ENCODE measurements at regions of chr3 and their contacts with region 1.

Region 1: GRCh38 chr3:30353711-30354467 is 252.5 kb upstream of the TGFBR2 start:
- DNase-seq: no peak
- ATAC-seq: peak; percentile 72
- H3K4me3 Mint-ChIP-seq: no peak overlapping the region
- H3K27ac Mint-ChIP-seq: peak overlapping the region; percentile 30
- H3K4me1 Mint-ChIP-seq: peaks cover 35% of the 10 kb centered on the region
- H3K27me3 Mint-ChIP-seq: peaks cover 21% of the 10 kb centered on the region
- CTCF ChIP-seq: no peak

Region 2: GRCh38 chr3:30332196-30333021 is 21.5 kb before region 1 on chr3:
- CTCF ChIA-PET with region 1: no interaction called
- POLR2A ChIA-PET with region 1: no interaction called
- intact Hi-C with region 1: loop called (anchors 2 kb)
- DNase-seq: no peak
- ATAC-seq: peak; percentile 77
- H3K4me3 Mint-ChIP-seq: peak overlapping the region; percentile 69
- H3K27ac Mint-ChIP-seq: peak overlapping the region; percentile 63
- H3K4me1 Mint-ChIP-seq: peaks cover 23% of the 10 kb centered on the region
- H3K27me3 Mint-ChIP-seq: no peaks in the 10 kb centered on the region
- CTCF ChIP-seq: no peak

Region 3: DNA sequence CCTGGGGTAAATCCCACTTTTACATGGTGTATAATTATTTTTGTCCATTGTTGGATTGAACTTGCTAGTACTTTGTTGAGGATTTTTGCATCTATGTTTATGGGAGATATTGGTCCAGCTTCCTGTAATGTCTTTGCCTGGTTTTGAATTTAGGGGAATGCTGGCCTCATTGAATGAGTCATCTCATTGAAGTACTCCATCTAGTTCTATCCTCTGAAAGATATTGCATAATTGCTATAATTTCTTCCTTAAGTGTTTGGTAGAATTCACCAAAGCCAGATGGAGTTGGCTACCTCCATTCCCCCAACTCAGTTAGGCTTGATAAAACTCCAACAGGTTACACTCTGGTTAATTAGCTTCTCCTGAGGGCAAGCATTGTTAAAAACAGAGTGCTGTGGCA is 15.1 kb after region 1 on chr3:
- CTCF ChIA-PET with region 1: no interaction called
- POLR2A ChIA-PET with region 1: no interaction called
- intact Hi-C with region 1: loop called (anchors 2 kb)
- DNase-seq: no peak
- ATAC-seq: no peak
- H3K4me3 Mint-ChIP-seq: no peak overlapping the region
- H3K27ac Mint-ChIP-seq: no peak overlapping the region
- H3K4me1 Mint-ChIP-seq: no peaks in the 10 kb centered on the region
- H3K27me3 Mint-ChIP-seq: peaks cover 8% of the 10 kb centered on the region
- CTCF ChIP-seq: no peak